Activated T-helper 1 cell treated with anti-CD3 and anti-CD28 coated beads, Interleukin-12 subunit alpha, Interleukin-12 subunit beta, Interleukin-2, Interleukin-4 antibody, amounts not matched to agents 30 ng/mL and 10 ng/mL and 1 ng/mL, durations not matched to agents 14 hours and 24 hours and 36 hours (primary cell): ENCODE measurements at regions of chr15 and their contacts with region 1.

Region 1: GRCh38 chr15:64634576-64635498 is 140.6 kb downstream of the RBPMS2 start:
- DNase-seq: peak; percentile 41
- H3K4me3 Mint-ChIP-seq: peak overlapping the region; percentile 42
- H3K27ac Mint-ChIP-seq: peak overlapping the region; percentile 80
- H3K4me1 Mint-ChIP-seq: peaks cover 51% of the 10 kb centered on the region
- H3K27me3 Mint-ChIP-seq: no peaks in the 10 kb centered on the region

Region 2: GRCh38 chr15:64622410-64623260 is 12.2 kb before region 1 on chr15:
- intact Hi-C with region 1: loop called (anchors 1 kb)
- DNase-seq: peak; percentile 48
- H3K4me3 Mint-ChIP-seq: peak overlapping the region; percentile 53
- H3K27ac Mint-ChIP-seq: peak overlapping the region; percentile 80
- H3K4me1 Mint-ChIP-seq: peaks cover 76% of the 10 kb centered on the region
- H3K27me3 Mint-ChIP-seq: no peaks in the 10 kb centered on the region